ENCODE measurements at regions of chr11 and their contacts with region 1.

Region 1: DNA sequence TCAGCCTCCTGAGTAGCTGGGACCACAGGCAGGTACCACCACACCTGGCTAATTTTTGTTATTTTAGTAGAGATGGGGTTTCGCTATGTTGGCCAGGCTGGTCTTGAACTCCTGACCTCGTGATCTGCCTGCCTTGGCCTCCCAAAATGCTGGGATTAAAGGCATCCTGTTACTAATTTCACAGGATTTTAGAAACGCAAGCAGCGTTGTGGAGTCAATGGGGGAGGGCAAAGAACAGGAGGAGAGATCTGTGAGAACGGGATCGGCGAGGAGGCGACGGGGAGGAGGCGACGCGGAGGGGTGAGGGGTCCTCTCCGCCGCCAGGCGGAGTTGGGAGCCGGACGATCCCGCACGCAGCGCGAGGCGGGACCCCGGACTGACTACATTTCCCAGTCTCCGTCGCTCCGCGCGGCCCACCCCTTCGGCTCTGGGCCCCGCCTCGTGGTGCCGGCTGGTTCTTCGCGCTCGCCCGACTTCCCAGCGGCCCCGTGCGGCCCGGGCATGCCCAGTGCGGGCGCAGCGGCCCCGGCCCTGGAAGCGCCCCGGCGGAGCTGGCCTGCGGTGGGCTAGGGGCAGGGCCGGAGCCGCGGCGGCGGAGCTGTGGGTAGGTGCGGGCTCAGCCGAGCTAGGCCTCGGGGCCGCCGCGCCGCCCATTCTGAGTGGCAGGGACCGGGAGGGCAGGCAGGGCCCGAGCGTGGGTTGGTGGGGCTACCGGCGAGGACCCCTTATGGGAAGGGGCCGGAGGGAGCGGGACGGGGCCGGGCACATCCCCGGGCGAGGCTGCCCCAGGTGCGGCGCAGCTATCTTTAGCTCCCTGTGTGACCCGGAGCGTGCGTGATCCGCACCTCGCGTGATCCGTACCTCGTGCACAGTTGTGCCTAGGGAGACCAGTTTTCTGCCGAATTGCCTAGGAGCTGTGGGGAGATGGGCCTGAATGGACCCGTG is at the start of gene EI24:
- DNase-seq: peak; percentile 92
- H3K4me3 ChIP-seq: peak within 1 kb of the TSS; percentile 7 to 74 (median 66)
- H3K27ac ChIP-seq: peak within 1 kb of the TSS; percentile 5
- H3K4me1 ChIP-seq: peaks cover 10% of the 10 kb centered on the region
- H3K27me3 ChIP-seq: no peaks in the 10 kb centered on the region
- CTCF ChIP-seq: peak; percentile 58 to 86
- POLR2A ChIP-seq: peak; percentile 96
- total RNA-seq, gene EI24: 115 and 119 TPM in 2 replicates

Region 2: GRCh38 chr11:125494974-125495725 is 74.1 kb before region 1 on chr11:
- CTCF ChIA-PET with region 1: no interaction called
- POLR2A ChIA-PET with region 1: no interaction called
- dilution Hi-C with region 1: no loop called
- intact Hi-C with region 1: loop called (anchors 1 kb)
- DNase-seq: peak; percentile 61
- H3K4me3 ChIP-seq: peak overlapping the region; percentile 52 to 73 (median 62)
- H3K27ac ChIP-seq: no peak overlapping the region
- H3K4me1 ChIP-seq: peaks cover 9% of the 10 kb centered on the region
- H3K27me3 ChIP-seq: peaks cover 0 to 2% of the 10 kb centered on the region in 2 experiments
- CTCF ChIP-seq: no peak
- POLR2A ChIP-seq: no peak

Region 3: DNA sequence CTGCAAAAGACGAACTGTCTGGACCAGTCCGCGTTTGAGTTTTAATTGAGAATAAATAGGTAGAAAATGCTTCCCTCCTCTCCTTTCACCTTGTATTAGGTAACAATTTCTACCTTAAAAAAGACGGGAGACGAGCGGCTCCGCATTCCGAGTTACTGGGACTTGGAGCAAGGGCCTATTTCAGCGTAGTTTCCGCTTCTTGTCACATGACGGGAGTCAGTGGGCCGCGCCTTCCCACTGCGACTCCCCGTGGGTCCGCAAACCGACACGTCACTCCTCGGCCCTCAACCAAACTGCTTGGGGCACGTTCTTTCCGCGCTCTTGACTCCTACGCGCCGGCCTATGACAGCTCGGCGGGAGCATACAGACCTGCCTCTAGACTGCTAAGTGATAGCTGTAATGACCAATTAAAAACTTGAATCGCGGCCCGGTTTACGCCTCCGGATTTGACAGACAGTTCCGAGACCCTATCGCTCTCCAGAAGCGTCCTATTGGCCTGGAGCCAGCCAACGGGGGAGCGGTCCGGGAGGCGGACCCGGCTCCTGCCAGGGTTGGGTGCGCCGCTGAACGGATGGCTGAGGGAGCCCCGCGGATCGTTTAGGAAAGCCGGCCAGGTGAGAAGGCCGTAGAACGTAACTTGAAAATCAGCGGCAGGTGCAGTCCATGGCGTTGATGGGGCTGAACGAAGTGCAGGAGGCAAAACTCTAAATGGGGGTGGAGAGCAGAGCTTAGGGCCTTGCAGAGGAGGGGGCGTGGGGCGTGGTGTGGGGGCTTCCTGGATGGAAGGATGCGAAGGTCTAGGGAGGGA is 23.3 kb after region 1 on chr11 and contains the start of gene STT3A:
- CTCF ChIA-PET with region 1: interaction called, 6 read pairs
- POLR2A ChIA-PET with region 1: interaction called, 3 read pairs
- dilution Hi-C with region 1: no loop called
- intact Hi-C with region 1: loop called (anchors 1 kb)
- DNase-seq: peak; percentile 100
- H3K4me3 ChIP-seq: peak within 1 kb of the TSS; percentile 63 to 96 (median 79)
- H3K27ac ChIP-seq: peak within 1 kb of the TSS; percentile 79
- H3K4me1 ChIP-seq: peaks cover 17% of the 10 kb centered on the region
- H3K27me3 ChIP-seq: no peaks in the 10 kb centered on the region
- CTCF ChIP-seq: no peak
- POLR2A ChIP-seq: peak; percentile 92
- total RNA-seq, gene STT3A: 216 and 236 TPM in 2 replicates

Region 4: DNA sequence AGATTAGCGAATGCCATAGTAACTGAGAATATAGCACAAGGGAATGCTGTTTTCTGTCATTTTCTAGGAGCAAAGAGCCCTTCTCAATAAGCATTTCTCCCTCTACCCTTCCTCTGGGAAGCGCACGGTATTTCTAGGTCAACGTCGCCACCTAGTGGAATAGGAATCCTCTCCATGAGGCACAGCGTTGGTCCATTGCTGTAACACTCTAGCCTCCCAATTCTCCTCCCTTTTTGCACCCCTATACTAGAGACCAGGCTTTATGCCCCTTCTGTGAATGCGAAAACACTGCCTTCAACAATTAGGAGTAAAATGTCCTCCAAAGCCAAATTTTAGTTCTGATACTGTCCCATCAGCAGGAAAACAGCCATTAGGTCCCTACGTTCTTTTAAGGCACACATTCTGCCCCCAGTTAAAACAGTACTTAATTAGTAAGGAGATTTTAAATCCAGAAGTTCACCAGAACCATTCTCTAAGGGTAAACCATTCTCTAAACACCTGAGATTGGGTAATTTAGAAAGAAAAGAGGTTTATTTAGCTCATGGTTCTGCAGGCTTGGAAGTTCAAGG is 305.4 kb after region 1 on chr11:
- CTCF ChIA-PET with region 1: interaction called, 3 read pairs
- POLR2A ChIA-PET with region 1: no interaction called
- dilution Hi-C with region 1: no loop called
- intact Hi-C with region 1: loop called (anchors 1 kb)
- DNase-seq: peak; percentile 66
- H3K4me3 ChIP-seq: no peak overlapping the region
- H3K27ac ChIP-seq: no peak overlapping the region
- H3K4me1 ChIP-seq: no peaks in the 10 kb centered on the region
- H3K27me3 ChIP-seq: no peaks in the 10 kb centered on the region
- CTCF ChIP-seq: peak; percentile 70 to 77
- POLR2A ChIP-seq: no peak

Region 5: GRCh38 chr11:125887373-125888324 is 318.4 kb after region 1 on chr11 and contains the start of gene HYLS1:
- CTCF ChIA-PET with region 1: no interaction called
- POLR2A ChIA-PET with region 1: no interaction called
- dilution Hi-C with region 1: no loop called
- intact Hi-C with region 1: loop called (anchors 2 kb)
- DNase-seq: peak; percentile 99
- H3K4me3 ChIP-seq: peak within 1 kb of the TSS; percentile 36 to 84 (median 73)
- H3K27ac ChIP-seq: peak within 1 kb of the TSS; percentile 76
- H3K4me1 ChIP-seq: peaks cover 30% of the 10 kb centered on the region
- H3K27me3 ChIP-seq: no peaks in the 10 kb centered on the region
- CTCF ChIP-seq: peak in 1 of 2 donors; percentile 22
- POLR2A ChIP-seq: peak; percentile 91
- total RNA-seq, gene HYLS1: 9.4 and 12.6 TPM in 2 replicates

Region 6: GRCh38 chr11:126146433-126147192 is 577.4 kb after region 1 on chr11:
- CTCF ChIA-PET with region 1: no interaction called
- POLR2A ChIA-PET with region 1: no interaction called
- dilution Hi-C with region 1: no loop called
- intact Hi-C with region 1: no loop called
- DNase-seq: no peak
- H3K4me3 ChIP-seq: no peak overlapping the region
- H3K27ac ChIP-seq: no peak overlapping the region
- H3K4me1 ChIP-seq: no peaks in the 10 kb centered on the region
- H3K27me3 ChIP-seq: no peaks in the 10 kb centered on the region
- CTCF ChIP-seq: no peak
- POLR2A ChIP-seq: no peak

Measured in endothelial cell of umbilical vein (primary cell).